ENCODE measurements at regions of chr10 and their contacts with region 1.

Region 1: DNA sequence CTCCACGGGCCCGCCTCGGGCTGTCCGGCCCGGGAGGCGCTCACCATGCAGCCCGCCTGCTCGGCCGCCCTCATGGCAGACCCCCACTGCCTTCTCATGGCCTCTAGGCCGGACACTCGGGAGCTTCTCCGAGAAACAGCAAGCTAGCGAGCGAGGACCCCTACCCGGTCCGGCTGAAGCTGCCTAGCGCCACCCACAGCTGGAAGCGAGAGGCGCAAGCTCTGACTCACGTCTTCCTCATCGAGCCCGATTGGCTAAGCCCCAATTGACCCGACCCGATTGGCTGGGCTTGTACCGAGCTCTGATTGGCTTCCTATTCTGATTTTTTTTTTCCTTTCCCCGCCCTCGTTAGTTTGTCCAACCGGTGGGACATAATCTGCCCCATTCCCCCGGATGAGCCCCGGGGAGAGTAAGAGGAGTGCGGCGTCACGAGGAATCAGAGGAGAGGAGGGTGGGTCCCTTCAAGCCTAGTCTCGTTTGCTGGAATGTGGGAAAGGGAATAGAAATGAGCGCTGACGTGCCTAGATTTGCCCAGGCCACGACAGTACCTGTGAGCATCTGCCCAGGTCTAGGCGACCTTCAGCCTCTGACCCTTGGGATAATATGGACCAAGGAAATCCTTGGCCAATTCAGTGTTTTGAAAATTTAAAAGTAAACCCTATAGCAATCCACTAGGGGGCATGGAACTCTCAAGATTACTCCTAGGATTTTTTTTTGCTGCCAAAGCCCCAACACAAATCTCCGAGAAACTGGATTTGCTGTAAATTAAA is at the start of gene TYSND1:
- DNase-seq: peak; percentile 100
- H3K4me3 ChIP-seq: peak within 1 kb of the TSS; percentile 74
- H3K4me3 Mint-ChIP-seq: peak within 1 kb of the TSS; percentile 98
- H3K27ac Mint-ChIP-seq: peak within 1 kb of the TSS; percentile 68
- H3K4me1 ChIP-seq: peaks cover 15% of the 10 kb centered on the region; the same call in 1 of the 2 replicates
- H3K4me1 Mint-ChIP-seq: peaks cover 8% of the 10 kb centered on the region
- H3K27me3 ChIP-seq: no peaks in the 10 kb centered on the region
- H3K27me3 Mint-ChIP-seq: no peaks in the 10 kb centered on the region
- CTCF ChIP-seq: peak; percentile 67 to 98
- total RNA-seq, gene TYSND1: 29.4 and 29.8 TPM in 2 replicates

Region 2: GRCh38 chr10:69968830-69969229 is 177.8 kb before region 1 on chr10:
- CTCF ChIA-PET with region 1: interaction called, 11 read pairs
- POLR2A ChIA-PET with region 1: interaction called, 3 read pairs
- intact Hi-C with region 1: loop called (anchors 1 kb)
- DNase-seq: peak in 1 of 2 experiments; percentile 65
- H3K4me3 ChIP-seq: no peak overlapping the region
- H3K4me3 Mint-ChIP-seq: no peak overlapping the region
- H3K27ac Mint-ChIP-seq: no peak overlapping the region
- H3K4me1 ChIP-seq: no peaks in the 10 kb centered on the region
- H3K4me1 Mint-ChIP-seq: no peaks in the 10 kb centered on the region
- H3K27me3 ChIP-seq: peaks cover 2% of the 10 kb centered on the region
- H3K27me3 Mint-ChIP-seq: peaks cover 34% of the 10 kb centered on the region
- CTCF ChIP-seq: peak; percentile 32 to 79

Region 3: DNA sequence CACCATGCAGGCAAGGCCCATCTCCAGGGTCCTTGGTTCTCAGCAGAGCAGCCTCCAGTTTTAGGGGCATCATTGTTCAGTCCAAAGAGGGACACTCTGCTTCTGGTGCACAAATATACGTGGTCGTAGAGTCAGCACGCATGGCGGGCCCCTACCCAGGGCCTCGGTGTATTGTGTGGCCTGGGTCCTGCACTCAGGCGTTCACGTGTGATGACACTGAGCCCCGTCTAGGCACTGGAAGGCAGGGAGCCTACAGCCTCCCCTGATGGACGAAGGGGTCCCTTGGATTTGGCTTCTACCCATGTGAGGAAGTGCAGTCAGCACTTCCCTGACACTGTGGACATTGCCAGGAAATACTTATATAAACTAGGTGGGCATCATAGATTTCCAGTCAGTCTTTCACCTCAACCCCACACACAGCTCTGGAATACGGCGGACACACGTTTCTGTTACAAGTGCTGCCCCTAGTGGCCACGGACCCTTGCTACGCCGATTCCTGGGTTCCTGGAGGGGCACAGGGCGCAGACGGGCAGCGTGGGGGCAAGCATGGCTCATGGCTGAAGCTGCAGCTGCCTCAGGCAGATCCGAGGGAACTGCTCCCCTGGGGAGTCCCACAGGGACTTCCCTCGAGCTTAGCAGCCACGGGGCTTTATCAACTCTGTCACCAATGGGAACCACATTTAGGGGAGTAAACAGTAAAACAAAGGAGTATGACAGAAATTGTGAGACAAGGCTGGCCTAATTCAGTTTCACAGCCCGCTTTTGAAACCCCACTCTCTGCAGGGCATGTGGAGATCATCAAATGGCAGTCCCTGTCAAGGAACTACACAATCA is 39.5 kb before region 1 on chr10:
- CTCF ChIA-PET with region 1: interaction called, 21 read pairs
- POLR2A ChIA-PET with region 1: interaction called, 5 read pairs
- intact Hi-C with region 1: no loop called
- DNase-seq: peak in 1 of 2 experiments; percentile 63
- H3K4me3 ChIP-seq: no peak overlapping the region
- H3K4me3 Mint-ChIP-seq: no peak overlapping the region
- H3K27ac Mint-ChIP-seq: no peak overlapping the region
- H3K4me1 ChIP-seq: peaks cover 11% of the 10 kb centered on the region
- H3K4me1 Mint-ChIP-seq: no peaks in the 10 kb centered on the region
- H3K27me3 ChIP-seq: no peaks in the 10 kb centered on the region
- H3K27me3 Mint-ChIP-seq: no peaks in the 10 kb centered on the region
- CTCF ChIP-seq: peak; percentile 64 to 76

Region 4: GRCh38 chr10:70169649-70170364 is 23.1 kb after region 1 on chr10:
- CTCF ChIA-PET with region 1: interaction called, 69 read pairs
- POLR2A ChIA-PET with region 1: interaction called, 128 read pairs
- intact Hi-C with region 1: loop called (anchors 1 kb)
- DNase-seq: peak in 1 of 2 experiments; percentile 33
- H3K4me3 ChIP-seq: peak overlapping the region; percentile 66
- H3K4me3 Mint-ChIP-seq: peak overlapping the region; percentile 96
- H3K27ac Mint-ChIP-seq: peak overlapping the region; percentile 98
- H3K4me1 ChIP-seq: peaks cover 5% of the 10 kb centered on the region
- H3K4me1 Mint-ChIP-seq: peaks cover 24% of the 10 kb centered on the region
- H3K27me3 ChIP-seq: no peaks in the 10 kb centered on the region
- H3K27me3 Mint-ChIP-seq: no peaks in the 10 kb centered on the region
- CTCF ChIP-seq: no peak

Region 5: GRCh38 chr10:70233109-70233938 is 86.7 kb after region 1 on chr10 and contains the start of gene PPA1:
- CTCF ChIA-PET with region 1: interaction called, 26 read pairs
- POLR2A ChIA-PET with region 1: interaction called, 25 read pairs
- intact Hi-C with region 1: no loop called
- DNase-seq: peak; percentile 99 to 100
- H3K4me3 ChIP-seq: peak within 1 kb of the TSS; percentile 85
- H3K4me3 Mint-ChIP-seq: peak within 1 kb of the TSS; percentile 76
- H3K27ac Mint-ChIP-seq: peak within 1 kb of the TSS; percentile 99
- H3K4me1 ChIP-seq: peaks cover 19% of the 10 kb centered on the region
- H3K4me1 Mint-ChIP-seq: peaks cover 19% of the 10 kb centered on the region
- H3K27me3 ChIP-seq: no peaks in the 10 kb centered on the region
- H3K27me3 Mint-ChIP-seq: no peaks in the 10 kb centered on the region
- CTCF ChIP-seq: peak; percentile 56 to 81
- total RNA-seq, gene PPA1: 350 and 353 TPM in 2 replicates

Region 6: GRCh38 chr10:70391654-70392053 is 245.0 kb after region 1 on chr10:
- CTCF ChIA-PET with region 1: interaction called, 28 read pairs
- POLR2A ChIA-PET with region 1: interaction called, 12 read pairs
- intact Hi-C with region 1: no loop called
- DNase-seq: no peak
- H3K4me3 ChIP-seq: no peak overlapping the region
- H3K4me3 Mint-ChIP-seq: no peak overlapping the region
- H3K27ac Mint-ChIP-seq: no peak overlapping the region
- H3K4me1 ChIP-seq: peaks cover 4% of the 10 kb centered on the region; the same call in 1 of the 2 replicates
- H3K4me1 Mint-ChIP-seq: peaks cover 24% of the 10 kb centered on the region
- H3K27me3 ChIP-seq: no peaks in the 10 kb centered on the region
- H3K27me3 Mint-ChIP-seq: no peaks in the 10 kb centered on the region
- CTCF ChIP-seq: no peak

Measured in Caco-2 (cell line).